ENCODE measurements at regions of chr6 and their contacts with region 1.

Region 1: DNA sequence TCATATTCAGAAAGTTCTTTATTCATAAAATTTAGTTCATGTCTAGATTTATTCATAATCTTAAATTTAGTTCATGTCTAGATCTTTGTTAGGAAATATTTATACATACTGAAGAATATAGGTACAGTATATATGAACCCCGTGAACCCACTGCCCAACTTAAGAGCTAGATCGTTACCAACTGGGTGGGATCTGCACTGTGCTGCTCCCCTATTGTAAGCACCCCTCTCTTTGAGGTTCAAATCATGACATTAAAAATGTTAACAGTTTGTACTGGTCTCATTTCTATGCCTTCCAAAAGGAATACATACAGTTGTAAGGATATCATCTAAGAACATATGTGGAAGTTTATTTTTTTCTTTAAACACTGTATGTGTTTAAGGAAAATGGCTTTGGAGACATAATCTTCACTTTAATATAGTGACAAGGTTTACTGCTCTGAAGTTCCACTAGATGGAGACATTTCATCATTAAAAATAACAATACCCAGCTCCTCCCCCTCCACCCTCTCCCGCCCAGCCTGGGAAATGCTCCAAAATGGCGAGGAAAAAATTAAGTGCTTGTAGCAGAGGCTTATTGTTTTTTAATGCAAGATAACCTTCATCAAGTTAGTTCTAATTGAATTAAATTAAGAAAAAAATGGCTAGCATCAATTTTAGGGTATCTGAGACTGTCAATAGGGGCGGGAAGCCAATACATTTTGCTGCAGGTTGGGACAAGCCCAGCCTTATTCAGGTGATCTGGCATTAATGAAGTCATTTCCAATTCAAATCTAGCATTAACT is 104.1 kb upstream of the TRAF3IP2 start:
- DNase-seq: peak; percentile 88
- H3K4me3 ChIP-seq: no peak overlapping the region
- H3K27ac ChIP-seq: peak overlapping the region in 3 of 4 donors; percentile 52 to 58 (median 56)
- H3K4me1 ChIP-seq: peaks cover 0 to 43% (median 38%) of the 10 kb centered on the region in 4 donors
- H3K27me3 ChIP-seq: no peaks in the 10 kb centered on the region
- CTCF ChIP-seq: peak; percentile 62 to 91 (median 68)
- EP300 ChIP-seq: no peak
- POLR2A ChIP-seq: no peak

Region 2: GRCh38 chr6:111417181-111417585 is 292.6 kb before region 1 on chr6:
- intact Hi-C with region 1: no loop called
- DNase-seq: peak; percentile 79
- H3K4me3 ChIP-seq: no peak overlapping the region
- H3K27ac ChIP-seq: peak overlapping the region; percentile 39 to 77 (median 68)
- H3K4me1 ChIP-seq: peaks cover 0 to 84% (median 70%) of the 10 kb centered on the region in 4 donors
- H3K27me3 ChIP-seq: no peaks in the 10 kb centered on the region
- CTCF ChIP-seq: no peak
- EP300 ChIP-seq: peak in 2 of 4 donors; percentile 75 to 79
- POLR2A ChIP-seq: no peak

Region 3: DNA sequence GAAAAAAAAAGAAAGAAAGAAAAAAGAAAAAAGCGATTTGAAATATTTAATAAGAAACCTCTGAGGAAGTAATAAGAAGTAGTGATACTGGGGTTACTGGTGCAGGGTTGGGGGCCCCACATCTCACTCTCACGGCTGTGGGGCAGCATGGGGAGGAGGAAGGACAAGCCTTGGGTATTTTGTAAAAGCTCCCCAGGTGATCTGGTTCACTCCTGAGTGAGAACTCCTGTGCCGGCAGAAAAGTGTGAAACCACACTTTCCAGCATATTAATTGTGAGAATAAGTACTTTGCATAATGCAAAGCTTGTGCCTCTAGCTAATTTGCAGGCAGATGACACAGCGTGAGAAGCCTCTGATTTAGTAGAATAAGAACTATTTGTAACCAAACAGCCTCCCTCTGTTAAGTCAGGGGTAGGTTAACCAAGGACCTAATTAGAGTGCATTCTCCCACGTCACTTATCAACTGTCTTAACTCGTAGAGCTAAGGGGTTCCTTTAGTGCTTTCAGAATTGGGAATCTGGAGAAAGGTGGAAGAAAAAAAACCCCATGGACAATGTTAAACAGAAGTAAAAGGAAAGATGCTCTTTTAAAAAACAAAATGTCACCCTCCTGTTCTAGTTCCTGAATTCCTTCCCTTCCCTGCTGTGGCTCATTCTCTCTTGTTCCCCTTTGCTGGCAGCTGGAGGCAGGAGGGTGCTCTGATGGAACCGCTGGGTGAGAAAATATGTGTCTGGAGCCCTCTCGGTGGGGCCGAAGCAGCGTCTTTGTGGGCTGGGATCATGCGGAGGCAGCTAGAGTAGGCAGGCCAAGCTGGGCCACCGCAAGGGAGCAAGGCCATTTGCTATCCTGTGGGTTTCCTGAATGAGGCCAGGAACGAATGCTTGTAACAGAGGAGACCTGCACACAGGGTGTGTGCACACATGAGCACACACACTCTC is 54.7 kb after region 1 on chr6:
- intact Hi-C with region 1: loop called (anchors 5 kb)
- DNase-seq: no peak
- H3K4me3 ChIP-seq: no peak overlapping the region
- H3K27ac ChIP-seq: peak overlapping the region in 3 of 4 donors; percentile 10 to 23 (median 14)
- H3K4me1 ChIP-seq: peaks cover 0 to 52% (median 39%) of the 10 kb centered on the region in 4 donors
- H3K27me3 ChIP-seq: no peaks in the 10 kb centered on the region
- CTCF ChIP-seq: no peak
- EP300 ChIP-seq: no peak
- POLR2A ChIP-seq: no peak

Region 4: DNA sequence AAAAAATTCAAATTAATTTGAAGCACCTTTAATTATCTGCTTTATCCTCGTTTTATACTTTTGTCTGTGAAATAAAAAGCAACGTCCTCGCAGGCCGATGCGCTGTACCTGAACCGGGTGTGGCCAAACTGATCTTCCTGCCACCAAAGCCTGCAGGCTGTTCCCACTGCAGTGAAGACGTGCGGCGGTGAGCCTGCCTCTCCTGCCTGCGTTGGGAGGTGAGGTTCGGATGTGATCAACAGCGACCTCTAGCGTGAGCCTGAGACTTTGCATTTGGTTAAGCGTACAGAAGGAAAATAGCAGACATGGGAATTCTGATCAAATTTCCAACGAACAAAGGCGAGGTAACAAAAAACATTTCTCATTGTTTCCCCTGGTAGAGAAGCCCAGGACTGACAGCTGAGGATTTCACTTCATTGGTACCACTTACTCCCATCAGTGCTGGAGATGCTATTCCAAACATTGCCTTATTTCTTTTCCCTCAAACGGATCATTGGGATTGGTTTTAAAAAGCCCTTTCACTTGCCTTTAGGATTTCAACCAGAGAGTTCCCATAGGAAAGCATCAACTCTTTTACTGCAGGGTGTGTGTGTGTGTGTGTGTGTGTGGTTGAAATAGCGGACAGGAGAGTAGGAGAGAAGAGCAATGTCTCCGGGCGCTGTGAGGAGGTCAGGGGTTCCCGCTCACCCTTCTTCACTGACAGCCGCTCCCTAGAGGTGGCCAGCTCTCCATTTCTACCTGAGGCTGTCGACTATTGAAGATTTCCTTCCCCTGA is 287.5 kb after region 1 on chr6:
- intact Hi-C with region 1: loop called (anchors 1 kb)
- DNase-seq: peak; percentile 93
- H3K4me3 ChIP-seq: peak overlapping the region in 1 of 4 donors; percentile 1
- H3K27ac ChIP-seq: peak overlapping the region in 3 of 4 donors; percentile 19 to 55 (median 35)
- H3K4me1 ChIP-seq: peaks cover 0 to 10% (median 0%) of the 10 kb centered on the region in 4 donors
- H3K27me3 ChIP-seq: no peaks in the 10 kb centered on the region
- CTCF ChIP-seq: peak; percentile 83 to 94 (median 86)
- EP300 ChIP-seq: no peak
- POLR2A ChIP-seq: no peak

Region 5: DNA sequence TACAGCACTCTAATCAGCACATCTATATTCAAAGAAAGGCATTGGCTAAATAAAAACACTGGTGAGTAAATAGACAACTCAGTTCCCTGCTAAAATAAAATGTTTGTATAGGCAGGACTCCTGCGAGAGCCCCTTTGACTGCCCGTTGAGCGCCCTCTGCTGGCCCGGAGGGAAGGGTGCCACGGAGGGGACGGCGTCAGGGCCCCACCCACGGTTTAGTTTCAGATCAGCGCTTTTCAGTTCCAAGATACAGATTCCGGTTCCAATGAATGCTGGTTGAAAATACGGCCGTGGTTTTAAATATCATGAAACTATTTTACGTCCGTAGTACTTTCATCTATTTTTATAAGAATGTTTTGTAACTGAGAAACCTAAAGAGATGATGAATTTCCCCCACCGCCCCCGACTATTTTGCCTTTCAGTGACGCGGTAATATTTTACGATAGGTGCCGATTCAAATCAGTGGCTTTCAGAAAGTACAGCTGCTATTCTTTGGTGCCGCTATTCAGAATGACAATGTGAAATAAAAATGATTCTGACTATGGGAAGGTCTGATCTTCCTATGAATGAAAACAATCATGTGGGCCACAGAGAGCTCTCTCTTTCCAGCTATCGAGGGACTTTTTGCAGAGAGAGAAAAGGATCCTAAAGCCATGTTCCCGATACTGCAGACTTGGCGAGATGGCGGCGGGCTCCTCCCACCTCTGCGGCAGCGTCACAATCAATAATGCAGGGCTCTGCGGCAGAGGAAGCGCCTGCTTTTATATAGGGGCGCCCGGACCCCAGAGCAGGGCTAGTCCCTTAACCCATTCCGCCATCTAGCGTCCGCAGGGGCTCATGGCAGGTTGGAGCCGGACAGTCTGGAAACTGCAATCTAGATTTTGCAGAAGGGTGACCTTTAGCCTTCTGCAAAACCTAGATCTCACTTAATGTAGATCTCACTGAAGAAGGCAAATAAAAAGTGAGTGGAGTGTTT is 333.5 kb after region 1 on chr6:
- intact Hi-C with region 1: loop called (anchors 1 kb)
- DNase-seq: peak; percentile 92
- H3K4me3 ChIP-seq: peak overlapping the region; percentile 32 to 61 (median 56)
- H3K27ac ChIP-seq: peak overlapping the region; percentile 77 to 84 (median 80)
- H3K4me1 ChIP-seq: peaks cover 0 to 35% (median 25%) of the 10 kb centered on the region in 4 donors
- H3K27me3 ChIP-seq: no peaks in the 10 kb centered on the region
- CTCF ChIP-seq: peak; percentile 86 to 94 (median 94)
- EP300 ChIP-seq: no peak
- POLR2A ChIP-seq: no peak

Region 6: DNA sequence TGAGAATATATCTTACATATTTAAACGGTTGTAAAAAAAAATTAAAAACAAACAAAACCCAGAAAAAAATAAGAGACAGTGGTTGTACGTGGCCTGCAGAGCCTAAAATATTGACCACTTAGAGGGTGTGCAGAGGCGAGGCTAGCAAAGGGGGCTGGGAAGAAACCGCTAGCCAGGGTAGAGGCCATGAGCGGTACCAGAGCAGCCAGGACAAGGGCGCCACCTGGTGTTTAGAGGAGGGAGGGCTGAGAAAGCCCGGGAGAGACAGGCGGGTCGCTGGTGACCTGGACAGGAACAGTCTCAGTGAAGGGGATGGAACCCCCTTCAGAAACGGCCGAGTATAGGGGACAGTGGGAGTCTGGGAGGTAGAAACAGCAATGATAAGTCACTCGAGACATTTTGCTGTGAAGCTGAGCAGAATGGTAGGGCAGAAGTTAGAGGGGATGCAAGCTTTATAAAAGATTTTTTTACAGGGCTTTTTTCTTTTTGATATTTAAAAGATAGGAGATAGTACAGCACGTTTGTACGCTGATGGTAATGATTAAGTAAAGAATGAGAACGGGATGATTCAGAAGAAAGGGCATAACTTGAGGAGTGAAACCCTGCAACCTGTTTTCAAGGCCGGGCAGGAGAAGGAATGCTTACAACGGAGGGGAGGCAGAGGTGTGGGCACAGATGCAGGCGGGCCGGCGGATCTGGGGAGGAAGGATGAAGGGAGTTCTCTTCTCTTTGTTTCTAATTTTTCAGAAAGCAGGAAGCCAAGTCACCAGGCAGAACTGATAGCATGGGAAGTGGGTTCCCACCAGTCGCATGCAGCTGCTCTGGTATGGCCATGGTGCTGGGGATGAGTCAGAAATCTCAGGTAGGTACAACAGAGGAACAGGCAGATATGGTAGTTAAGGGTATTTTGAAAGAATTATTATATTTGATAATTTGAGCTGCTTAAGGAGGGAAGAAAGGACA is 453.8 kb after region 1 on chr6:
- intact Hi-C with region 1: loop called (anchors 10 kb)
- DNase-seq: peak; percentile 76
- H3K4me3 ChIP-seq: no peak overlapping the region
- H3K27ac ChIP-seq: peak overlapping the region; percentile 19 to 41 (median 22)
- H3K4me1 ChIP-seq: no peaks in the 10 kb centered on the region
- H3K27me3 ChIP-seq: no peaks in the 10 kb centered on the region
- CTCF ChIP-seq: peak; percentile 38 to 63 (median 44)
- EP300 ChIP-seq: no peak
- POLR2A ChIP-seq: no peak

Measured in sigmoid colon (tissue), 7 donors.